K562 (cell line): ENCODE measurements at regions of chr3 and their contacts with region 1.

Region 1: DNA sequence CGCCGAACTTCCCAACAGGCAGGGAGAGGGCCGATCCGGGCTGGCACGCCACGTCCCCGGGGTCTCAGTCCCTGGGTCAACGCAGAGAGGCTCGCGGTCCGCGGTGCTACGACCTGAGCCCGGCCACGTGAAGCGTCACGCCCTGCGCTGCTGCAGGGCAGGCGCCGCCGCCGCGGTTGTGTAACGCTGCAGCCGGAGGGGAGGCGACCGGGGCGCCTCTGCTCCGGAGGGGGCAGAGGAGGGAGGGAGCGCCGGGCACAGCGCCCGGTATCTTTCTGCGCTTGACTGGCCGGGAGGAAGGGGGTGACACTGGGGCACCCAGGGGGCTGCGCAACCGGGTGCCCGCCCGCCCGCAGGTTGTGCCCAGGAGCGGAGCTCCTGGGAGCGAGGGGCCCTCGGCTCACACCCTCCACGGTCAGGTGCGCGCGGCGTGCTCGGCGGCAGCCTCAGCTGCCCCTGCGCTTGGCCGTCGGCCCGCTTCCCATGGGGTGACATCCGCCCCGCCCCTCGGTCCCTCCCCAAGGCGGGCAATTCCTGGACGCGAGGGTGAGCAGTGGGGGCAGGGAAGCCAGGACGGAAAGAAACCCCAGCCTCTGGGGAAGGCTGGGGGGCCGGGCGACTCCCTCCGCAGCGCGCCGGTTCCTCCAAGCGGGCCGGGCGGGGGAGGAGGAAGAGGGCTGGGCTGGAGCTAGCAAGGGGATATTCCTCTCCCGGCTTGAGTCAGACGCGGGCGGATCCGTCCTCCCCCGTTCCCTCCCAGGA is 852 bp upstream of the BHLHE40 start:
- DNase-seq: peak; percentile 90 to 99 (median 94)
- ATAC-seq: peak; percentile 73
- H3K4me3 ChIP-seq: peak overlapping the region; percentile 52
- H3K27ac ChIP-seq: peak overlapping the region; percentile 97
- H3K4me1 ChIP-seq: peaks cover 40 to 41% of the 10 kb centered on the region in 2 experiments
- H3K27me3 ChIP-seq: no peaks in the 10 kb centered on the region
- CTCF ChIP-seq: peak; percentile 1 to 11 (median 4); a peak in 1 of 6 replicates
- EP300 ChIP-seq: peak; percentile 90
- POLR2A ChIP-seq: peak; percentile 89
- RAD21 ChIP-seq: peak; percentile 30 to 43; a peak in 3 of 4 replicates

Region 2: DNA sequence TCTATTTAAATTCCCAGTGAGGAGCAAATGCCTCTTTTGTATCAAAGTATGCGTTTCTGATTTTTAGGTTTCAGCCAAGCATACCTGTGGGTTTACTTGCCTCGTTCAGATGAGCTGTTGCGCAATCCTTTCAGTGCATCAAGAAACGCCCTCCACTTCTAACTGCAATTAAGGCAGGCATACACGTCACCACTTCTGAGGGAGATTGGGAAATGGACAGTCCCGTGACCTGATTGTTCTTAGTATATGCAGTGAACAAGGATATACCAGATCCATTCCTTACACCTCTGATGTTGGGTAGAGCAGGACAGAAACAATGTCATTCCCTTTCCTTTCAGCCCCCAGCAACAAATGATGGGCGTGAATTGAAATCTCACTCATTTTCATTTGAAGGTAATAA is 266.2 kb before region 1 on chr3:
- CTCF ChIA-PET with region 1: interaction called, 23 read pairs
- POLR2A ChIA-PET with region 1: interaction called, 36 read pairs
- in situ Hi-C with region 1: no loop called
- intact Hi-C with region 1: no loop called
- DNase-seq: no peak
- ATAC-seq: no peak
- H3K4me3 ChIP-seq: no peak overlapping the region
- H3K27ac ChIP-seq: no peak overlapping the region
- H3K4me1 ChIP-seq: no peaks in the 10 kb centered on the region; a peak in 1 of 5 replicates
- H3K27me3 ChIP-seq: no peaks in the 10 kb centered on the region
- CTCF ChIP-seq: no peak
- EP300 ChIP-seq: no peak
- POLR2A ChIP-seq: no peak
- RAD21 ChIP-seq: 0 out of 4 replicates have a peak, but pooled peaks of 1 of the 2 experiments have one; percentile 3

Region 3: GRCh38 chr3:4741404-4742307 is 236.7 kb before region 1 on chr3:
- CTCF ChIA-PET with region 1: no interaction called
- POLR2A ChIA-PET with region 1: interaction called, 8 read pairs
- in situ Hi-C with region 1: no loop called
- intact Hi-C with region 1: loop called (anchors 1 kb)
- DNase-seq: peak; percentile 85 to 95 (median 86)
- ATAC-seq: peak; percentile 78
- H3K4me3 ChIP-seq: no peak overlapping the region
- H3K27ac ChIP-seq: peak overlapping the region; percentile 89
- H3K4me1 ChIP-seq: peaks cover 44 to 75% of the 10 kb centered on the region in 2 experiments
- H3K27me3 ChIP-seq: no peaks in the 10 kb centered on the region
- CTCF ChIP-seq: peak in 1 of 3 experiments; percentile 17; a peak in 1 of 6 replicates
- EP300 ChIP-seq: peak; percentile 94
- POLR2A ChIP-seq: peak; percentile 73
- RAD21 ChIP-seq: peak in 1 of 2 experiments; percentile 17; a peak in 1 of 4 replicates

Region 4: DNA sequence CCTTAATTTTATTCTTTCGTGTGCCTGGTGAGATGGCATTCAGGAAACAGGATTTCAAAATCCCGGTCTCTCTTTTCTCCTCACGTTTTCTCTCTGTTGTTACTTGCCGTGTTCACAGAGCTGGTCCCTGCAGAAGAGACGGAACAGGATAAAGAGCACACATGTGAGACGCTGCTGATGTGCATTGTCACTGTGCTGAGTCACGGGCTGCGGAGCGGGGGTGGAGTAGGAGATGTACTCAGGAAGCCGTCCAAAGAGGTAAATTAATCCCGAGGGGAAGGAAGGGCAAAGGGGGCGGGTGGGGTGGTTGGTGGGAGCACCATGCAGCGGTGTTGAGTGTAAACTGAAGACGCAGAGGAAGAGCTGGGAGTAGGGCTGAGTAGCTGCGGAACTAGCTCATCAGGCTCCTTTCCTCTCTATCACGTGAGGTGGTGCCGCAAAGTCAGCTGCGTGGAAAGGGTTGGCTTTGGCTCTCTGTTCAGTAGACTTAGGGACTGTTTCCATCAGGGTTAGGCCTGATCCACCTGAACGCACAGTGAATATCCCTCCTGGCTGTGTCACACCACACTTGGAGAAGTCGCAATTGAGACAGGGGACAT is 164.0 kb before region 1 on chr3:
- CTCF ChIA-PET with region 1: no interaction called
- POLR2A ChIA-PET with region 1: interaction called, 7 read pairs
- in situ Hi-C with region 1: loop called (anchors 5 kb)
- intact Hi-C with region 1: loop called (anchors 1 kb)
- DNase-seq: peak; percentile 96 to 99 (median 98)
- ATAC-seq: peak; percentile 93
- H3K4me3 ChIP-seq: peak overlapping the region; percentile 39
- H3K27ac ChIP-seq: peak overlapping the region; percentile 93
- H3K4me1 ChIP-seq: peaks cover 16 to 67% of the 10 kb centered on the region in 2 experiments
- H3K27me3 ChIP-seq: no peaks in the 10 kb centered on the region
- CTCF ChIP-seq: no peak
- EP300 ChIP-seq: peak; percentile 96
- POLR2A ChIP-seq: peak; percentile 84
- RAD21 ChIP-seq: peak in 1 of 2 experiments; percentile 19; a peak in 2 of 4 replicates

Region 5: DNA sequence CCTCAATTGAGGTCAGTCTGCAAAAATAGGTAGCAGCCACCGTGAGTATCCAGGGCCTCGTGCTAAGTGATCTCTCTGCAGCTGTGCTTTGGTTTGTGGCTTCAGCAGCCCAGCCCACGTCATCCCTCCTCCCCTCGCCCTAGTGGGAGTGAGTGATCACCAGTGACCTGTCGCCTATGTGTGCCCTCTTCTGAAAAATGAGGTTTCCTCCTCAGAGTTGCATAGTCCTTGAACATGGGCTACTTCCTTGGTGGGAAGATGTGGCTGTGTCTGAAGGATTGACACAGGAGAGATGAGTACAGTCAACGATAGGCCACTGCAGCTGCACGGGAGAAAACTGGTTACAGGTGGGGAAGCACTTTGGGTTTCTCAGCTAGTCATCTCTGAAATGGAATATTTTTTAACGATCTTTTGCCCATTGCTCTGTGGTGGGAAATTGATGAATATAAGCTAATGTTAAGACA is 143.9 kb before region 1 on chr3:
- CTCF ChIA-PET with region 1: no interaction called
- POLR2A ChIA-PET with region 1: interaction called, 5 read pairs
- in situ Hi-C with region 1: no loop called
- intact Hi-C with region 1: loop called (anchors 2 kb)
- DNase-seq: peak in 3 of 4 experiments; percentile 38 to 55 (median 40)
- ATAC-seq: peak; percentile 40
- H3K4me3 ChIP-seq: no peak overlapping the region
- H3K27ac ChIP-seq: no peak overlapping the region
- H3K4me1 ChIP-seq: peaks cover 9 to 48% of the 10 kb centered on the region in 2 experiments
- H3K27me3 ChIP-seq: no peaks in the 10 kb centered on the region
- CTCF ChIP-seq: no peak
- EP300 ChIP-seq: no peak
- POLR2A ChIP-seq: no peak
- RAD21 ChIP-seq: 0 out of 4 replicates have a peak, but pooled peaks of 1 of the 2 experiments have one; percentile 5

Region 6: DNA sequence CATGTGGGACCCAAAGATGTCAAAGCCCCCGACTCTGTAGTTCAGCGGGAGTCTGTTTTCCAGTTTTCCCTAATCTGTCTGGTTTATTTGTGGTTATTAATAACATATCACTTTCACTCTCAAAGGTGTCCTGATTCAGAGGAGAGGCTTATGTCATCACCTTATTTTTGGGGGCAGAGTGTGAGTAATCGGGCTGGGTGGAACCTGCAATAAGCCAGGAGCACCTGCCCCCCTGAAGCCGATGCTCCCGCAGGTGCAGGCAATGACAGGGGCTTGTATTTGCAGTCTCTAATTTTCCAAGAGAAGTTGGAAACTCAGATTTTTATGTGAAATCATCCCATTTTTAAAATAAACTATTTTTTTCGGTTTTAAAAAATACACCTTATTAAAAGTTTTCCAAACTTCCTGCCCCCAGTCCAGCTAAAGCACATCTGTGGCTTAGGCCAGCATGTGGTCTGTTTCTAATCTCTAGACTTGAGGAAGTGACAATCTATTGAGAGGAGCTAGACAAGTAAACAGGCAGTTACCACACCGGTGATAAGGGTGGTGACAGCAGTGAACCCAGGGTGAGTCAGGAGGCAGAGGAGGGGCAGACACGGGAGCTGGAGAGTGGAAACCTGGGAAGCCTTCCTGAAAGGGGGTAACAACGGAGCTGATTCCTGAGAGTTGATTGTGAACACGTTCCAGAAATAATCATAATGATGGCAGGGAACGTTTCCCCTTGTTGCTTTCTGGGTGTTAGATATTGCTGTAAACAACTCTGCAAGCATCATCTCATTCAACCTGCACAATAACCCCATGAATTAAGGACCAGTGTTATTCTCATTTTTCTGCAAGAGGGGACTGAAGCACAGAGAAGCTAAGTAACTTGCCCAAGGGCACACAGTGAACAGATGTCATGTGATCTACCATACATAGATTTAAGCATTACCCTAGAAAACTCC is 38.1 kb after region 1 on chr3:
- CTCF ChIA-PET with region 1: no interaction called
- POLR2A ChIA-PET with region 1: interaction called, 38 read pairs
- in situ Hi-C with region 1: loop called (anchors 5 kb)
- intact Hi-C with region 1: loop called (anchors 1 kb)
- DNase-seq: peak; percentile 79 to 94 (median 86)
- ATAC-seq: peak; percentile 75
- H3K4me3 ChIP-seq: no peak overlapping the region
- H3K27ac ChIP-seq: peak overlapping the region; percentile 61
- H3K4me1 ChIP-seq: peaks cover 88 to 90% of the 10 kb centered on the region in 2 experiments
- H3K27me3 ChIP-seq: no peaks in the 10 kb centered on the region; a peak in 1 of 5 replicates
- CTCF ChIP-seq: no peak; a peak in 1 of 6 replicates
- EP300 ChIP-seq: peak; percentile 100
- POLR2A ChIP-seq: no peak
- RAD21 ChIP-seq: peak; percentile 25 to 36; a peak in 2 of 4 replicates

Region 7: DNA sequence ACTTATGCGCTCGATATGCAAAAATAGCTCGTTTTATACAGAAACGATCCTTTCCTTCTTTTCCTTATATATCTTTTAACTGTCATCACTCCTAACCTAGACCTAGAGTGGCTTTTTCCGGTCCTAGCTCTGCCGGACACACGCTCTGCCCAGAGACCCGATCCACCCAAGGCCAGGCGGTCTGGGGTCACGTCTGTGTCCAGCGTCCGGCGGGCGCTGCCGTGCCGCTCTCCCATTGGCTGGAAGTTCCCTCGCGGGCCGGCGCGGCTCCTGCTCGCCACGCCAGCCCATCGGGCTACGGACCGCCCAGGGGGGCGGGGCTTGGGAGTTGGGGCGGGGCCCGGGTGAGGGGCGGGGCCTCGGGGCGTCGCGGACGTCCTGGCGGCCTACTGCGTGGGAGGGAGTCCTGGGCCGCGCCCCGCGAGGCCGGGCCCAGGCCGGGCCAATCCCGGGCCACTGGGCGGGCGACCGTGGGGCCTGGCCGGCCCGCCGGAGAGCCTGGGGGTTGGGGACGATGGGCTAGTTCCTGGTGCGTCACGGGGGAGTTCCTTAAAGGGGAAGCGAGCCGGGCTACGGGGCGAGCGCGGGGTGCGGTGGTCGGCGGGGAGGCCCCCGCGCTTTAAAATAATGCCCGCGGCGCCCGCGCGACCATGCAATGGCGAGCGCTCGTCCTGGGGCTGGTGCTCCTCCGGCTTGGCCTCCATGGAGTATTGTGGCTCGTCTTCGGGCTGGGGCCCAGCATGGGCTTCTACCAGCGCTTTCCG is 209.0 kb after region 1 on chr3 and contains the start of gene EDEM1:
- CTCF ChIA-PET with region 1: interaction called, 4 read pairs
- POLR2A ChIA-PET with region 1: interaction called, 5 read pairs
- in situ Hi-C with region 1: no loop called
- intact Hi-C with region 1: loop called (anchors 5 kb)
- DNase-seq: peak; percentile 96 to 99 (median 99)
- ATAC-seq: peak; percentile 93
- H3K4me3 ChIP-seq: peak within 1 kb of the TSS; percentile 87
- H3K27ac ChIP-seq: peak within 1 kb of the TSS; percentile 97
- H3K4me1 ChIP-seq: peaks cover 21 to 48% of the 10 kb centered on the region in 2 experiments
- H3K27me3 ChIP-seq: no peaks in the 10 kb centered on the region
- CTCF ChIP-seq: no peak; a peak in 1 of 6 replicates
- EP300 ChIP-seq: no peak
- POLR2A ChIP-seq: peak; percentile 97
- RAD21 ChIP-seq: no peak
- polyA plus RNA-seq, gene EDEM1: 6.2 to 8.8 TPM